A673 (cell line): ENCODE measurements at regions of chr16 and their contacts with region 1.

Region 1: DNA sequence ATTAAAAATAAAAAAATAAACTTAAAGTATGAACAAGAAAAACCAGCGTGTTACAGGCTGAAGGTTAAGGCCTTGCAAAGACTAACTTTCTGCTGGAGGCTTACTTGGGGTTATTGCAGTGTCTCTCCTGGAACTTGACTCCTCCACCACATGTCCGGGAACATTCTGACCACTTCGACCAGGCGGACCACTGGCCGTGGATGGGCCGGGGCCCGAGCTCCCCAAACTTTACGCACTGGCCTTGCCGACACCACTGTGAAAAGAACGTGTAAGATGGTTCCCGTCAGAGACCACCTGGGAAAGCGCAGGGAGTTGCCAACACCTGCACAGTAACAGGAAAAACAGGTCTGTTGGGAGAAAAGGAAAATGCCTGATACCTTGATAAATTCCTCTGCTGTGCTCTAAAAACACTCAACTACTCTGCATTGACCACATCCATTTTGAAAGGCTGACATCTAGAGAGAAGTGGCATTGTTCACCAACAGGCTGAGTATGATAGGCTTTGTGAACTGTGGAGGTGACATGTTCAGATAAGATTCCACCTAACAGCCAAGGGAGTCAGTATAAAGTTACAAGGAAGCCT is 99.1 kb downstream of the ADAMTS18 start:
- DNase-seq: no peak
- H3K4me3 ChIP-seq: no peak overlapping the region
- H3K27ac ChIP-seq: no peak overlapping the region
- H3K4me1 ChIP-seq: no peaks in the 10 kb centered on the region
- H3K27me3 ChIP-seq: peaks cover 11% of the 10 kb centered on the region
- CTCF ChIP-seq: no peak

Region 2: DNA sequence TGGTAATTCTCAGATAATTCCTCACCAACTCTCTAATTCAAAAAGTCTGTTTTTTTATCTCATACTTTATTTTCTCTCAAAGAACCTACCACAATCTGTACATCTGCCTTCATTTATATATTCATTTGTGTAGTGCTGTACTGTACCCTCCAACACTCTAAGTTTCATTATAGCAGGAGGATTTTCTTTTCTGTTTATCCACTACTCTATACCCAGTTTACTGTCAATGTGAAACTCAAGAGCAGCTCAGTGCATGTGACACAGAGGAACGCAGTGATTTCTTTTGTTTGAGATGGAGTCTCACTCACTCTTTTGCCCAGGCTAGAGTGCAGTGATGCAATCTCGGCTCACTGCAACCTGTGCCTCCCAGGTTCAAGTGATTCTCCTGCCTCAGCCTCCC is 18.7 kb before region 1 on chr16:
- CTCF ChIA-PET with region 1: no interaction called
- POLR2A ChIA-PET with region 1: no interaction called
- intact Hi-C with region 1: loop called (anchors 2 kb)
- DNase-seq: no peak
- H3K4me3 ChIP-seq: no peak overlapping the region
- H3K27ac ChIP-seq: no peak overlapping the region
- H3K4me1 ChIP-seq: no peaks in the 10 kb centered on the region
- H3K27me3 ChIP-seq: no peaks in the 10 kb centered on the region
- CTCF ChIP-seq: no peak

Region 3: GRCh38 chr16:77437859-77438258 is 102.1 kb after region 1 on chr16:
- CTCF ChIA-PET with region 1: no interaction called
- POLR2A ChIA-PET with region 1: no interaction called
- intact Hi-C with region 1: no loop called
- DNase-seq: peak; percentile 3
- H3K4me3 ChIP-seq: no peak overlapping the region
- H3K27ac ChIP-seq: no peak overlapping the region
- H3K4me1 ChIP-seq: no peaks in the 10 kb centered on the region
- H3K27me3 ChIP-seq: peaks cover 70% of the 10 kb centered on the region
- CTCF ChIP-seq: peak; percentile 31; the same call in 1 of the 2 replicates